Naive thymus-derived CD4-positive, alpha-beta T cell (primary cell): ENCODE measurements at regions of chr6 and their contacts with region 1.

Region 1: GRCh38 chr6:148166339-148166968 is 176.2 kb upstream of the SASH1 start:
- DNase-seq: peak in 5 of 9 donors; percentile 13 to 24 (median 16)
- ATAC-seq: no peak
- H3K4me3 ChIP-seq: no peak overlapping the region
- H3K4me3 Mint-ChIP-seq: no peak overlapping the region
- H3K27ac ChIP-seq: no peak overlapping the region
- H3K27ac Mint-ChIP-seq: no peak overlapping the region
- H3K4me1 ChIP-seq: no peaks in the 10 kb centered on the region
- H3K4me1 Mint-ChIP-seq: peaks cover 0 to 2% (median 0%) of the 10 kb centered on the region in 7 donors
- H3K27me3 ChIP-seq: no peaks in the 10 kb centered on the region
- H3K27me3 Mint-ChIP-seq: peaks cover 0 to 8% (median 4%) of the 10 kb centered on the region in 5 donors

Region 2: DNA sequence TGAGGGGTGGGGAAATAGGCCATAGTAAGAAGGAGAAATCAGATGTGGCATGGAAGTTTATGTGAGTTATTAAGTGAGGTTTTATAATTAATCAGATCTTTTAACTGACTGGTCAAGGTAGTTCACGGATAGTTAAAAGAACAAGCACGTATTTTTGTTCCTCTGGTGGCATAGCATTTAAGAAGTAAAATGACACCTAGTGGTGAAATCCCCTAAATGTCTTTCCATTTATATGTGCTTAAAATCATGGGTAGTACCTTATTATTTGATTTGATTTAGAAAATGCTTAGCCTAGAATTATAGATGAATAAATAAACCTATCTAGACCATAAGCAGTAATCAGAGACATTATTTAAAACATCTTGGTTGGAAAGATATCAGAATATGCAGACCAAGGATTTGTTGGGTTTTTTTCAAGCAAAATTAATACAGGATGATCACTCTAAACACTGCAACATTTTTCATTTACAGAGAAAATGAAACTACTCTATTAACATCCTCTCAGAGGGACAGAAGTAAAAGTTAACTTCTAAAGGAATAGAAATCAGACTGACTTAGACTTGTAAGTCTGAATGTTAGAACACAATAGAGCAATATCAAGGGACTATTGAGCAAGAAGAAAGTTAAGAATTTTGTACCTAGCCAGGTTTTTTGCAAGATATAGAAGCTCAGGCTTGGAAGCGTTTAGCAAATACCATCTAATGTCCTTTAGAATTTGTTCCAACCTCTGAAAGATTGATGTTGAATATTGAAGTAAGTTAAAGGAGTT is 881.2 kb before region 1 on chr6:
- CTCF ChIA-PET with region 1: no interaction called
- POLR2A ChIA-PET with region 1: no interaction called
- intact Hi-C with region 1: loop called in 1 of 2 experiments (anchors 5 kb)
- DNase-seq: peak in 5 of 9 donors; percentile 16 to 34 (median 21)
- ATAC-seq: peak; percentile 52
- H3K4me3 ChIP-seq: no peak overlapping the region
- H3K4me3 Mint-ChIP-seq: peak overlapping the region in 2 of 10 donors; percentile 6 to 38
- H3K27ac ChIP-seq: no peak overlapping the region
- H3K27ac Mint-ChIP-seq: peak overlapping the region in 5 of 9 donors; percentile 0 to 76 (median 11)
- H3K4me1 ChIP-seq: no peaks in the 10 kb centered on the region
- H3K4me1 Mint-ChIP-seq: peaks cover 9 to 32% (median 25%) of the 10 kb centered on the region in 7 donors
- H3K27me3 ChIP-seq: no peaks in the 10 kb centered on the region
- H3K27me3 Mint-ChIP-seq: no peaks in the 10 kb centered on the region

Region 3: GRCh38 chr6:147506704-147507114 is 659.7 kb before region 1 on chr6:
- CTCF ChIA-PET with region 1: no interaction called
- POLR2A ChIA-PET with region 1: no interaction called
- intact Hi-C with region 1: loop called in 1 of 2 experiments (anchors 1 kb)
- DNase-seq: peak in 1 of 9 donors; percentile 58
- ATAC-seq: no peak
- H3K4me3 ChIP-seq: no peak overlapping the region
- H3K4me3 Mint-ChIP-seq: peak overlapping the region in 9 of 10 donors; percentile 50 to 80 (median 52)
- H3K27ac ChIP-seq: no peak overlapping the region
- H3K27ac Mint-ChIP-seq: no peak overlapping the region
- H3K4me1 ChIP-seq: peaks cover 0 to 7% of the 10 kb centered on the region in 2 donors
- H3K4me1 Mint-ChIP-seq: peaks cover 6 to 23% (median 21%) of the 10 kb centered on the region in 7 donors
- H3K27me3 ChIP-seq: peaks cover 3 to 5% of the 10 kb centered on the region in 2 donors
- H3K27me3 Mint-ChIP-seq: peaks cover 60 to 74% (median 67%) of the 10 kb centered on the region in 5 donors

Region 4: GRCh38 chr6:148144917-148145521 is 21.4 kb before region 1 on chr6:
- CTCF ChIA-PET with region 1: interaction called, 3 read pairs
- POLR2A ChIA-PET with region 1: no interaction called
- intact Hi-C with region 1: loop called (anchors 1 kb)
- DNase-seq: peak in 6 of 9 donors; percentile 4 to 52 (median 10)
- ATAC-seq: no peak
- H3K4me3 ChIP-seq: no peak overlapping the region
- H3K4me3 Mint-ChIP-seq: no peak overlapping the region
- H3K27ac ChIP-seq: no peak overlapping the region
- H3K27ac Mint-ChIP-seq: no peak overlapping the region
- H3K4me1 ChIP-seq: no peaks in the 10 kb centered on the region
- H3K4me1 Mint-ChIP-seq: peaks cover 0 to 8% (median 8%) of the 10 kb centered on the region in 7 donors
- H3K27me3 ChIP-seq: no peaks in the 10 kb centered on the region
- H3K27me3 Mint-ChIP-seq: peaks cover 4 to 13% (median 9%) of the 10 kb centered on the region in 5 donors